SK-N-SH (cell line): ENCODE measurements at regions of chr3 and their contacts with region 1.

Region 1: GRCh38 chr3:13495921-13496723 is 16.0 kb downstream of the HDAC11 start:
- DNase-seq: peak; percentile 84
- H3K4me3 ChIP-seq: no peak overlapping the region
- H3K27ac ChIP-seq: no peak overlapping the region
- H3K4me1 ChIP-seq: peaks cover 0 to 11% of the 10 kb centered on the region in 2 experiments; a peak in 1 of 4 replicates
- H3K27me3 ChIP-seq: no peaks in the 10 kb centered on the region
- CTCF ChIP-seq: peak; percentile 91
- EP300 ChIP-seq: no peak
- RAD21 ChIP-seq: peak; percentile 99

Region 2: DNA sequence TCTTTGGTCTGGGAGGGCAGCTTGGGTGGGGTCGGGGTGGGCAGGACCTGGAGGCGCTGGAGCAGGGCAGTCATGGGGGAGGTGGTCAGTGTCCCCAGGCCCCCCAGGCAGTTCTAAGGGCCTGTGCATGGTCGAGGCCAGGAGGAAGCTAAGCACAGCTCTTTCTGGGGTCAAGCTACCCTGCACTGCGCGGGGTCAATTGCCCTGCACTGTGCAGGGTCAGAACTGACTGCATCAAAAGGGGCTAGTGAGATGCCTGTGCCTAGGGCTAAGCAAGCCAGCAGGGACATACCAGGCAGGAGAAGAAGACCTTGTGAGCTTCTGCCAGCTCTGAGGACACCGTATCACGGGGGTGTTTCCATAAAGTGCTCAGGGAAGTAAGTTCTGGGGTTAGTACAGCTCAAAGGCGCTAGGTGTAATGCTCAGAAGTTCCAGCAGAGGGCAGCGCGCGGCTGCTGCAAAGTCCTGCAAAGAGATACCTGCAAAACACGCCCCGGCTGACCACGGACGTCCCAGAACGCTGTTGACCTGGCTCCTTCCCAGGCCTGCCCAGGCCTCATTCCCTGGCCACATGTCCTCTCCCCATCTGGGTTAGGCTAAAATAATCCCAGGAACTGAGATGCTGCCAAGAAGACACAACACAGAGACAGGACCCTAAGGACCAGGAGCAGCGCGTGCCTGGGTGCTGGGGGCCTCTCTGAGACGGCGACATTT is 404.1 kb before region 1 on chr3:
- CTCF ChIA-PET with region 1: interaction called, 13 read pairs
- POLR2A ChIA-PET with region 1: no interaction called
- DNase-seq: peak; percentile 83
- H3K4me3 ChIP-seq: no peak overlapping the region; a peak in 1 of 4 replicates
- H3K27ac ChIP-seq: no peak overlapping the region
- H3K4me1 ChIP-seq: peaks cover 0 to 16% of the 10 kb centered on the region in 2 experiments; a peak in 1 of 4 replicates
- H3K27me3 ChIP-seq: no peaks in the 10 kb centered on the region
- CTCF ChIP-seq: peak; percentile 86
- EP300 ChIP-seq: no peak
- RAD21 ChIP-seq: peak; percentile 93

Region 3: GRCh38 chr3:13513051-13513908 is 17.2 kb after region 1 on chr3:
- CTCF ChIA-PET with region 1: interaction called, 31 read pairs
- POLR2A ChIA-PET with region 1: no interaction called
- DNase-seq: peak; percentile 70
- H3K4me3 ChIP-seq: no peak overlapping the region
- H3K27ac ChIP-seq: peak overlapping the region in 1 of 2 experiments; percentile 67; a peak in 3 of 4 replicates
- H3K4me1 ChIP-seq: peaks cover 0 to 36% of the 10 kb centered on the region in 2 experiments; a peak in 1 of 4 replicates
- H3K27me3 ChIP-seq: no peaks in the 10 kb centered on the region
- CTCF ChIP-seq: no peak
- EP300 ChIP-seq: 0 out of 4 replicates have a peak, but pooled peaks of 1 of the 2 experiments have one; percentile 15
- RAD21 ChIP-seq: no peak

Region 4: GRCh38 chr3:13564751-13565560 is 68.8 kb after region 1 on chr3:
- CTCF ChIA-PET with region 1: interaction called, 15 read pairs
- POLR2A ChIA-PET with region 1: interaction called, 3 read pairs
- DNase-seq: no peak
- H3K4me3 ChIP-seq: no peak overlapping the region
- H3K27ac ChIP-seq: peak overlapping the region in 1 of 2 experiments; percentile 95; a peak in 2 of 4 replicates
- H3K4me1 ChIP-seq: peaks cover 0 to 71% of the 10 kb centered on the region in 2 experiments; a peak in 2 of 4 replicates
- H3K27me3 ChIP-seq: no peaks in the 10 kb centered on the region
- CTCF ChIP-seq: no peak
- EP300 ChIP-seq: no peak
- RAD21 ChIP-seq: no peak

Region 5: GRCh38 chr3:13623099-13623654 is 127.1 kb after region 1 on chr3:
- CTCF ChIA-PET with region 1: interaction called, 14 read pairs
- POLR2A ChIA-PET with region 1: no interaction called
- DNase-seq: peak; percentile 83
- H3K4me3 ChIP-seq: no peak overlapping the region
- H3K27ac ChIP-seq: peak overlapping the region in 1 of 2 experiments; percentile 60; a peak in 1 of 4 replicates
- H3K4me1 ChIP-seq: peaks cover 0 to 12% of the 10 kb centered on the region in 2 experiments; a peak in 1 of 4 replicates
- H3K27me3 ChIP-seq: no peaks in the 10 kb centered on the region
- CTCF ChIP-seq: no peak
- EP300 ChIP-seq: no peak
- RAD21 ChIP-seq: no peak

Region 6: DNA sequence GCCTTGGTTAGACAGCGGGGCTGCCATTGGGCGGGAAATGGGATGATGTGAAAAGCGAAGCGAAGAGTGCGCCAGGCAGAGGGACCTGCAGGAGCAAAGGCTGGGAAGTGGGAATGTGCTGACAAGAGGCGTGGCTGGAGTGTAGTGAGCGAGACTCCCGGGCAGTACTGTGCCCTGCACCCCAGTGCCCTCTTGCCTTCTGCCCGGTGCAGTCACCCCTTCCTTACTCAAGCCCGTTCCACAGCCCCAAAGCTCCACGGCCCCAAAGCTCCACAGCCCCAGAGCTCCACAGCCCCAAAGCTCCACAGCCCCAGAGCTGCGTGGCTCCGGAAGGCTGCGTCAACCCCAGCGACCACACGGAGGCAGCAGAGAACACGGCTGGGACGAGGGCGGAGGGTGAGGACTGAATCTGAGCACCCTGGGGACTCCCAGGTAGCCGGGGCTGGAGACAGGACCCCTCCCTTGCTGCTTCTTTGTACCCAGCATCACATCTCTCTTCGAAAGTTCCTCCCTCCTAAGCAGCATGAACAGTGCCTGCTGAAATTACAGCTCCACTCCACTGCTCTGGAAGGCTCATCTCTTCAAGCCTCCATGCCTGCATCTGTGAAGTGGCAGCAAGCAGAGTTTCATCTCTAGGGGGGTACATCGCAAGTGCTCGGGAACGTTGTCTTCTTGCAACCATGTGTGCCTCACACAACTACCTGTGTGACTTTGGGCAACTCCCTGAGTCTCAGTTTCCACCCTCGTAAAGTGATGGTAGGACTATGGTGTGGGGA is 161.7 kb after region 1 on chr3:
- CTCF ChIA-PET with region 1: interaction called, 872 read pairs
- POLR2A ChIA-PET with region 1: no interaction called
- DNase-seq: peak; percentile 92
- H3K4me3 ChIP-seq: peak overlapping the region in 1 of 2 experiments; percentile 26; a peak in 1 of 4 replicates
- H3K27ac ChIP-seq: no peak overlapping the region
- H3K4me1 ChIP-seq: peaks cover 0 to 9% of the 10 kb centered on the region in 2 experiments; a peak in 1 of 4 replicates
- H3K27me3 ChIP-seq: no peaks in the 10 kb centered on the region
- CTCF ChIP-seq: peak; percentile 73
- EP300 ChIP-seq: no peak
- RAD21 ChIP-seq: peak; percentile 85

Region 7: DNA sequence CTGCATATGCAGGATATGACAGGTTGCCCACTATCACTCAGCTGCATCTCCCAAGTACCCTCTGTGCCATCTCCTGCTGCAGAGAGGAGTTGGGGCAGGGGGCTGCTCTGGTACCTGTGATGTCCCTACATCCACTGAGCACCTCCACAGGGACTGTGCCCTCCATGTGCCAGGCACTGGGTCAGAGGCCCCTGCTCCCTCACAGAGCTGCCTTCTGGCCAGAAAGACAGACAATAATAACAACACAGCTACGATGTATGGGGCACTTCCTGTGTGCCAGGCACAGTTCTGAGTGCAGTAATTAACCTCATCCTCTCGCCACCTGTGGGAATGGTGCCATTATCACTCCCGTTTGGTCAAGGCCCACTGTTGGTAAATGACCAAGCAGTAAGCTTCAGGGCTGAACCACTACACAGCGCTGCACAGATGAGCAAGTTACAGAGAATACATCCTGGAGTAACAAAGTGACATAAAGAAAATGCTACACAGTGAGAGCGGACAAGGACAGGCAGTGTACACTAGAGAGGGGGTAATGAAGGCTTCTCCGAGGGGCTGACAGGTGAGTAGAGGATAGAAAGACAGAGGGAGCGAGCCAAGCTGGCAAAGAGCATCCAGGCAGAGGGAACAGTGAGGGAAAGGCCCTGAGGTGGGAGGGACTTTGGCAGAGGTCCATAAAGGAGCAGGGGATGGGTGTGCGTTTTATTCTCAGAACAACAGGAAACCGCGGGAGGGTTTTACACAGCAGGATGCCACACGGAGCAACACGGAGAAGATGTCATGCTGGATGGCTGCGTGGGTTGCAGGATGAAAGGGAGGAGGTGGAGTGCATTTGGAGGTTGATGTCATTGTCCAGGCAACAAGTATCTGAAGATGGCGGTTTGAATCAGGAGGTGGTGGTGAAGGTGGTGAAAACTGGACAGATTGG is 370.2 kb after region 1 on chr3:
- CTCF ChIA-PET with region 1: no interaction called
- POLR2A ChIA-PET with region 1: no interaction called
- DNase-seq: no peak
- H3K4me3 ChIP-seq: no peak overlapping the region
- H3K27ac ChIP-seq: no peak overlapping the region
- H3K4me1 ChIP-seq: peaks cover 0 to 5% of the 10 kb centered on the region in 2 experiments; a peak in 1 of 4 replicates
- H3K27me3 ChIP-seq: no peaks in the 10 kb centered on the region
- CTCF ChIP-seq: no peak
- EP300 ChIP-seq: no peak
- RAD21 ChIP-seq: no peak